Activated CD8-positive, alpha-beta T cell treated with anti-CD3 and anti-CD28 coated beads for 36 hours (primary cell): ENCODE measurements at regions of chr3 and their contacts with region 1.

Region 1: GRCh38 chr3:87771341-87772192 is 287.2 kb downstream of the CGGBP1 start:
- DNase-seq: peak; percentile 39
- ATAC-seq: peak; percentile 90
- H3K4me3 Mint-ChIP-seq: no peak overlapping the region
- H3K27ac Mint-ChIP-seq: no peak overlapping the region
- H3K4me1 Mint-ChIP-seq: no peaks in the 10 kb centered on the region
- H3K27me3 Mint-ChIP-seq: peaks cover 7% of the 10 kb centered on the region
- CTCF ChIP-seq: peak; percentile 77

Region 2: GRCh38 chr3:88003115-88003755 is 231.7 kb after region 1 on chr3:
- CTCF ChIA-PET with region 1: interaction called, 10 read pairs
- POLR2A ChIA-PET with region 1: no interaction called
- intact Hi-C with region 1: loop called (anchors 2 kb)
- DNase-seq: no peak
- ATAC-seq: no peak
- H3K4me3 Mint-ChIP-seq: no peak overlapping the region
- H3K27ac Mint-ChIP-seq: no peak overlapping the region
- H3K4me1 Mint-ChIP-seq: peaks cover 3% of the 10 kb centered on the region
- H3K27me3 Mint-ChIP-seq: peaks cover 3% of the 10 kb centered on the region
- CTCF ChIP-seq: peak; percentile 85

Region 3: GRCh38 chr3:88180398-88180999 is 408.9 kb after region 1 on chr3:
- CTCF ChIA-PET with region 1: no interaction called
- POLR2A ChIA-PET with region 1: no interaction called
- intact Hi-C with region 1: loop called (anchors 5 kb)
- DNase-seq: peak; percentile 54
- ATAC-seq: peak; percentile 45
- H3K4me3 Mint-ChIP-seq: no peak overlapping the region
- H3K27ac Mint-ChIP-seq: no peak overlapping the region
- H3K4me1 Mint-ChIP-seq: peaks cover 3% of the 10 kb centered on the region
- H3K27me3 Mint-ChIP-seq: no peaks in the 10 kb centered on the region
- CTCF ChIP-seq: peak; percentile 71